Caco-2 (cell line): ENCODE measurements at regions of chr6 and their contacts with region 1.

Region 1: DNA sequence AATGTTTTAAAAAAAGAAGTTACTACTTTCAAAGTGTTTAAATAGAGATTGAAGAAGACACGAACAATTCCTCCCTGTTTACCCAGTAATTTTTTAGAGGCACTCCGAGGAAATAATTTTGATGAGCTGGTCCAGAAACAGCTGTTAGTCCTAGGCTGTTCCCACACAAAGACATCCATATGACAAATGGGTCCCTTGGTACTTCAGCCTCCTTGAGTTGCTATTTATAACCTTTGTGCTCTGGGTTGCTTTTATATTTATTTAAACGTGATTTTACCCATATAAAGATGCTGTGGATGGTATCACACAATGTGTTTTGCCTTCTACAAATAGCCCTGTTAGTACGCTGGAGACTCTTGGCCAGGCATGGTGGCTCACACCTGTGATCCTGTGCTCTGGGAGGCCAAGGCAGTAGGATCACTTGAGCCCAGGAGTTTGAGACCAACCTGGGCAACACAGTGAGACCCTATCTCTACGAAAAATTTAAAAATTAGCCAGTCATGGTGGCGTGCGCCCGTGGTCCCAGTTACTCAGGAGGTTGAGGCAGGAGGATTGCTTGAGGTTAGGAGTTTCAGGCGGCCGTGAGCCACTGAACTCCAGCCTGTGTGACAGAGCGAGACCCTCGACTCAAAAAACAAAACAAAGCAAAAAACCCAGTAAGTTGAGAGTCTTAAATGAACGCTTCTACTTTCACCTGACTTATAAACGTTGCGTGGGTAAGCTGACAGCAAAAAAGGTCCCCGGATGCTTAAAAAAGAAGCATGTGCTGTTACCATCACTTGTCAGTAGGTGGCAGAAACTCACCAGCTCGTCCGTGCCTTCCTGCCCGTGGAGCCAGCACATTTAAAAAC is 56.9 kb upstream of the ARMH2 start:
- DNase-seq: peak; percentile 50 to 66
- H3K4me3 ChIP-seq: no peak overlapping the region
- H3K4me3 Mint-ChIP-seq: no peak overlapping the region
- H3K27ac Mint-ChIP-seq: no peak overlapping the region
- H3K4me1 ChIP-seq: no peaks in the 10 kb centered on the region
- H3K4me1 Mint-ChIP-seq: no peaks in the 10 kb centered on the region
- H3K27me3 ChIP-seq: no peaks in the 10 kb centered on the region
- H3K27me3 Mint-ChIP-seq: peaks cover 5% of the 10 kb centered on the region
- CTCF ChIP-seq: peak; percentile 70 to 79

Region 2: DNA sequence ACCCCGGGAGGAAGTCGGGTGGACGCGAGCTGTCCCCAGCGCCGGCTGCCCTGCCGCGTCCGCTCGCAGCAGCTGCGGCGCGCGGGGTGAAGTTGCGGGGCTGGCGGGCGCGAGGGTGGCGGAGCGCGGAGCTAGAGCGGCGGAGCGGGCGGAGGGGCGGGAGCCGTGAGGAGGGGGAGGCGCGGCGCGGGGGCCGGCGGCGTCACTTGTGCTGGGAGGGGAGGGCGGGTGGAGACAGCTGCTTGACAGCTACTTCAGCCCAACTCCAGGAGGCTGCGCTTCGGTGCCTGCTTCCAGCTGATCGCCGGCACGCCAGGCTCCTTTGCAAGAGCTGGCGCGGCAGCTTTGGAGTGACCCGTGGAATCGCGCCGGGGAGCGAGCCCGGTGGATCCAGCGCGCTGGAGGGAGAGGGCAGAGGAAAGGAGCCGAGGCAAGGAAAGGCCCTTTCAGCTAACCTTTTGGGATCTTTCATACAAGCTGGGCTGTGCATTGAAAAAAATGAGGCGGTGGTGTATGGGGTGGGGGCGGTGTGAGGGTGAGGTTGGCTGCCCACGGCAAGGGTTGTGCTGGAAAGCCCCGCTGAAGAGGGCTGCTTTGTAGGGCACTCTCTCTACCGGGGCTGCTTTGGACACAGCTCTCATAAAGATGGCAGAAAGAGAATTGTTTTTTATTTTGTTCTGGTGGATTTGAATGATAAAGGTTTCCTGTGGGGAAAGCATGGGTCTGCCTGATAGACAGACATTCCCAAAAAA is 55.5 kb after region 1 on chr6:
- CTCF ChIA-PET with region 1: no interaction called
- POLR2A ChIA-PET with region 1: no interaction called
- intact Hi-C with region 1: loop called (anchors 5 kb)
- DNase-seq: peak; percentile 44 to 47
- H3K4me3 ChIP-seq: peak overlapping the region; percentile 40
- H3K4me3 Mint-ChIP-seq: peak overlapping the region; percentile 76
- H3K27ac Mint-ChIP-seq: no peak overlapping the region
- H3K4me1 ChIP-seq: no peaks in the 10 kb centered on the region
- H3K4me1 Mint-ChIP-seq: no peaks in the 10 kb centered on the region
- H3K27me3 ChIP-seq: peaks cover 4% of the 10 kb centered on the region
- H3K27me3 Mint-ChIP-seq: peaks cover 17% of the 10 kb centered on the region
- CTCF ChIP-seq: no peak

Region 3: GRCh38 chr6:24991810-24992467 is 136.3 kb after region 1 on chr6:
- CTCF ChIA-PET with region 1: interaction called, 68 read pairs
- POLR2A ChIA-PET with region 1: no interaction called
- intact Hi-C with region 1: loop called (anchors 1 kb)
- DNase-seq: peak; percentile 41 to 64
- H3K4me3 ChIP-seq: no peak overlapping the region
- H3K4me3 Mint-ChIP-seq: no peak overlapping the region
- H3K27ac Mint-ChIP-seq: no peak overlapping the region
- H3K4me1 ChIP-seq: peaks cover 6% of the 10 kb centered on the region; the same call in 1 of the 2 replicates
- H3K4me1 Mint-ChIP-seq: peaks cover 17% of the 10 kb centered on the region
- H3K27me3 ChIP-seq: no peaks in the 10 kb centered on the region
- H3K27me3 Mint-ChIP-seq: no peaks in the 10 kb centered on the region
- CTCF ChIP-seq: peak; percentile 63 to 68

Region 4: GRCh38 chr6:25017932-25018567 is 162.4 kb after region 1 on chr6:
- CTCF ChIA-PET with region 1: interaction called, 19 read pairs
- POLR2A ChIA-PET with region 1: no interaction called
- intact Hi-C with region 1: loop called (anchors 1 kb)
- DNase-seq: peak in 1 of 2 experiments; percentile 32
- H3K4me3 ChIP-seq: no peak overlapping the region
- H3K4me3 Mint-ChIP-seq: no peak overlapping the region
- H3K27ac Mint-ChIP-seq: no peak overlapping the region
- H3K4me1 ChIP-seq: peaks cover 3% of the 10 kb centered on the region; the same call in 1 of the 2 replicates
- H3K4me1 Mint-ChIP-seq: no peaks in the 10 kb centered on the region
- H3K27me3 ChIP-seq: no peaks in the 10 kb centered on the region
- H3K27me3 Mint-ChIP-seq: no peaks in the 10 kb centered on the region
- CTCF ChIP-seq: peak in 1 of 2 experiments; percentile 40

Region 5: DNA sequence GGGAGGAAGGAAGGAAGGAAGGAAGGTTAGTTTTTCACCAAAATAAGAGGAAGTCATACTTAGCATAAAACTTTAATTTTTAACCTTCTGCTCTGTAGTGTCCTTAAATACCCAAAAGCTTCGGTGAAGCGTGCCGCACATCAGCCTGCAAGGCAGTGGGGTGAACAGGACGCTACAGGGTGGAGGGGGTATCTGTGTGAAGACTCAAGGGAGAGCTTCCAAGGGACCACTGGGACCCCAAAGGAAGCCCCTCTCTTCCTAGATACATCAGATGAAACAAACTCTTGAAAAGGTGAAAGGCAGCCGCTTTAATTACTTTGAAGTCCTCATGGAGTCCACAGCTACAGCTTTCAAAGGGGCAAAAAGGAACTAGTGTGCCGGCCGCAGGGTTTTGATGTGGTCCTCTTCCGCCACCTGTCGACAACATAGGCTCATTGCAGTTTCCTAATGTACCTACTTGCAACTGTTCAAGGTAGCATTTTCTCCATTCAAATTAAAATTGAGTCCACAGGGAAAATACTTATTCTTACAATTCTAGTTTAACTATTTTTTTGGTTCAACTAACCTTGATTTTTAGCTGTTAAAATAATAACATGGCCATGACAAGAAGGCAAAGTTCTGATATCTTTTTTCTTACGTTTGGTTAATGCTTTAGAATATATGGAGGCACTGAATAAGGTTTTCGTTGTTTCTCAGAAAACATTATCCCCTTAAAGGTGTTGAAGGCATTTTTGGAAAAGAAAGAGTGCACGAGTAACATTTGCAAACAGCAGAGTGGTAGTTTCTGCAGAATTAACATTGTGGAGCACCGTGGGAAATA is 215.1 kb after region 1 on chr6:
- CTCF ChIA-PET with region 1: interaction called, 16 read pairs
- POLR2A ChIA-PET with region 1: no interaction called
- intact Hi-C with region 1: no loop called
- DNase-seq: peak; percentile 69 to 71
- H3K4me3 ChIP-seq: no peak overlapping the region
- H3K4me3 Mint-ChIP-seq: no peak overlapping the region
- H3K27ac Mint-ChIP-seq: no peak overlapping the region
- H3K4me1 ChIP-seq: no peaks in the 10 kb centered on the region
- H3K4me1 Mint-ChIP-seq: no peaks in the 10 kb centered on the region
- H3K27me3 ChIP-seq: no peaks in the 10 kb centered on the region
- H3K27me3 Mint-ChIP-seq: no peaks in the 10 kb centered on the region
- CTCF ChIP-seq: peak; percentile 78 to 83